CD4-positive, alpha-beta T cell (primary cell): ENCODE measurements at regions of chr2 and their contacts with region 1.

Region 1: GRCh38 chr2:36966370-36967235 is at the start of gene STRN:
- DNase-seq: peak; percentile 93 to 99 (median 98)
- ATAC-seq: peak; percentile 88
- H3K4me3 ChIP-seq: peak within 1 kb of the TSS; percentile 86
- H3K4me3 Mint-ChIP-seq: peak within 1 kb of the TSS; percentile 99
- H3K27ac ChIP-seq: peak within 1 kb of the TSS; percentile 89 to 90
- H3K27ac Mint-ChIP-seq: peak within 1 kb of the TSS; percentile 97
- H3K4me1 ChIP-seq: peaks cover 26% of the 10 kb centered on the region
- H3K4me1 Mint-ChIP-seq: peaks cover 58% of the 10 kb centered on the region
- H3K27me3 ChIP-seq: no peaks in the 10 kb centered on the region
- H3K27me3 Mint-ChIP-seq: no peaks in the 10 kb centered on the region
- CTCF ChIP-seq: no peak
- total RNA-seq, gene STRN: 20.4 to 20.8 TPM

Region 2: GRCh38 chr2:38771632-38772031 is 1805.0 kb after region 1 on chr2:
- CTCF ChIA-PET with region 1: no interaction called
- POLR2A ChIA-PET with region 1: no interaction called
- intact Hi-C with region 1: loop called in 1 of 2 experiments (anchors 10 kb)
- DNase-seq: no peak
- ATAC-seq: no peak
- H3K4me3 ChIP-seq: no peak overlapping the region
- H3K4me3 Mint-ChIP-seq: no peak overlapping the region
- H3K27ac ChIP-seq: no peak overlapping the region
- H3K27ac Mint-ChIP-seq: no peak overlapping the region
- H3K4me1 ChIP-seq: no peaks in the 10 kb centered on the region
- H3K4me1 Mint-ChIP-seq: no peaks in the 10 kb centered on the region
- H3K27me3 ChIP-seq: no peaks in the 10 kb centered on the region
- H3K27me3 Mint-ChIP-seq: peaks cover 16% of the 10 kb centered on the region
- CTCF ChIP-seq: no peak